PC-9 (cell line): ENCODE measurements at regions of chr14 and their contacts with region 1.

Region 1: GRCh38 chr14:44897045-44897844 is 64.5 kb downstream of the KLHL28 start:
- DNase-seq: peak; percentile 85 to 87
- H3K4me3 ChIP-seq: peak overlapping the region; percentile 77
- H3K27ac ChIP-seq: peak overlapping the region; percentile 90
- H3K4me1 ChIP-seq: peaks cover 14% of the 10 kb centered on the region
- H3K27me3 ChIP-seq: no peaks in the 10 kb centered on the region
- CTCF ChIP-seq: no peak

Region 2: DNA sequence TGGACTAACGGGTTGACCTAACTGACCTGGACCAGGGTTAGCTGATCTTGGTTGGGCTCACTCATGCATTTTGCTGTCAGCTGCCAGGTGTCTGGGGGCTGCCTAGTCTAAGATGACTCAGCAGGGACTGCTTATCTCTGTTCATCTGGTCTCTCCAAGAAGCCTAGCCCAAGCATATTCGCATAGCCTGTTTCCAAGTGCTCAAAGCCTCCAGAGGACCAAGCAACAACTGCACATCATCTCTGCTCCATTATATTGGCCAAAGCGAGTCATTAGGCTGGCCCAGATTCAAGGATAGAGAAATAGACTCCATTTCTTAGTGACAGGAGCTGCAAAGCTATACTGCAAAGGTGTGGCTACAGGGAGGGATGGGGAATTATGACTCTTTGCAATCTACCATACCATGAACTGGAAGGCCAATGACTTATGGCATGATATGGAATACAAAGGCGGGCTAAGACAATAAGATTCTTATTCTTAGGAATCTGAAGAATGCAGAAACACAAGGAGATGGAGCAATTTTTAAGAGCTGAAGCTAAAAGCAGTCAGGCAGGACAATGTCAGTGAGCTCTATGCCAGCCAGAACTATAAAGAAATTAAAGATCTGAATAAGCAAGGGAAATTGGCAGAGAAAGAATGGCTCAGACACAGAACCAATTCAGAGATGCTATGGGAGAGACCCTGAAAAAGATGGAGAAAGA is 195.5 kb before region 1 on chr14:
- CTCF ChIA-PET with region 1: no interaction called
- POLR2A ChIA-PET with region 1: no interaction called
- intact Hi-C with region 1: no loop called
- DNase-seq: peak in 1 of 2 experiments; percentile 9
- H3K4me3 ChIP-seq: no peak overlapping the region
- H3K27ac ChIP-seq: no peak overlapping the region
- H3K4me1 ChIP-seq: no peaks in the 10 kb centered on the region
- H3K27me3 ChIP-seq: no peaks in the 10 kb centered on the region
- CTCF ChIP-seq: no peak

Region 3: DNA sequence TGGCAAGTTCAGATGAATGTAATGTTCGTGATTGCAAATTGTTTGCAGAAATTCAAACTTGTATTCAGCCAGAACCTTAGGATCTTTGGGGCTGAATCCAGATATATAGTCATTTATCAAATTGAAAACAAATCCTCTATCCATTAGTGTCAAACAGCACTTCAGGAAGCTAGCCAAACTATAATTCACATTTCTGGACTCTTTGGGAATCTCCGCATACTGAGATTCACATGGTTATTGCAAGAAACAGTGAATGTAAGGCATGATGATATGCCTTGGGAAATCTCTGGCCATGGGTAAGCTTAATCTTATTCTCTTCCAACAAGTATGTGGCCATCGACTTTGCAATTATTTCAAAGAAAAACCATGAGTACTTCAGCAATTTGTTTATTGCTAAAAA is 34.0 kb before region 1 on chr14:
- CTCF ChIA-PET with region 1: no interaction called
- POLR2A ChIA-PET with region 1: no interaction called
- intact Hi-C with region 1: no loop called
- DNase-seq: no peak
- H3K4me3 ChIP-seq: no peak overlapping the region
- H3K27ac ChIP-seq: no peak overlapping the region
- H3K4me1 ChIP-seq: no peaks in the 10 kb centered on the region
- H3K27me3 ChIP-seq: peaks cover 27% of the 10 kb centered on the region; the same call in 1 of the 2 replicates
- CTCF ChIP-seq: no peak

Region 4: GRCh38 chr14:44961604-44962333 is 64.5 kb after region 1 on chr14 and contains the starts of genes KLHL28 and TOGARAM1:
- CTCF ChIA-PET with region 1: no interaction called
- POLR2A ChIA-PET with region 1: no interaction called
- intact Hi-C with region 1: loop called (anchors 1 kb)
- DNase-seq: peak; percentile 94 to 99
- H3K4me3 ChIP-seq: peak within 1 kb of the TSS; percentile 65
- H3K27ac ChIP-seq: peak within 1 kb of the TSS; percentile 69
- H3K4me1 ChIP-seq: peaks cover 35% of the 10 kb centered on the region
- H3K27me3 ChIP-seq: no peaks in the 10 kb centered on the region
- CTCF ChIP-seq: no peak
- total RNA-seq, gene KLHL28: 10.3 and 10.5 TPM in 2 replicates
- total RNA-seq, gene TOGARAM1: 9.2 and 12.9 TPM in 2 replicates

Region 5: DNA sequence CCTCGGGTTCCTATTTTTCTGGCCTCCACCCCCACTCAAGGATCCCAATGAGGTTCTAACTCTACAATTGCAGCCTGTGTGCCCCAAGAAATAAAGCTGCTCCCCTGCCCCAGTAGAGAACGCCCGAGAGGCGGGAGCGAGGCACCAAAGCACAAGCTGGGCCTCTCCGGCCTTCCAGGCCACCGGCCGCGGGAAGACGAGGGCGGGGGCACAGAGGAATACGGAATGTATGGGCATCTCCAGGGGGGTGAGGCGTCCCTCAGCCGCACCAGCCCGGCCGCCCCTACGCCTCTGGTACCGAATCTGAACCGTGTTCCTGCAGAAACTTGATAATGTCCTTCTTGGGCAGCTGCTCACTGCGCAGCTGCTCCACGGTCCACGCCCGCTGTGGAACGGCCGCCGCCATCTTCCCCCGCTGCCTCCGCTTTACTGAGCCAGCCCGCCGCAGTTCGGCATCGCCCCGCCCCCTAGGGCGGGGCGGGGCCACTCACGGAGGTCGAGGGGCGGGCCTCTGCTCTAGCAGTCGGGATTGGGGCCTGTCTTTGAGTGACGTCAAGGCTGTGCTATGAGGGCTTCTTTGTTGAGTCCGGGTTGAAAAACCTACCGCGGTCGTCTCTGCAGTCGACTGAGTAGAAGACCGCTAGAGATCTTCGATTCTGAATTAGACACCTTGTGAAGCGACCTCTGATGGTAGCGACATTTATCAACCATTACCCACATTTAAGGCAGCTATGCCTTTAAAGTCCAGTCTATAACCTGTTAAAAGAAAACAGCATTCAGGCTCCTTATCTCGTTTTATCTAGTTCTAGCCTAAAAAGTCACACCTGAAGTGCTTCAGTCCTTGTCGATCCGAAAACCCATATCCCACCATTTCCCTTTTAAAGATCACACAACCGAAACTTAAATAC is 237.1 kb after region 1 on chr14 and contains the start of gene FKBP3:
- CTCF ChIA-PET with region 1: no interaction called
- POLR2A ChIA-PET with region 1: no interaction called
- intact Hi-C with region 1: loop called (anchors 5 kb)
- DNase-seq: peak; percentile 91 to 98
- H3K4me3 ChIP-seq: peak within 1 kb of the TSS; percentile 94
- H3K27ac ChIP-seq: peak within 1 kb of the TSS; percentile 72
- H3K4me1 ChIP-seq: peaks cover 27% of the 10 kb centered on the region
- H3K27me3 ChIP-seq: no peaks in the 10 kb centered on the region
- CTCF ChIP-seq: peak; percentile 22; the same call in 1 of the 2 replicates
- total RNA-seq, gene FKBP3: 39.4 and 53.5 TPM in 2 replicates

Region 6: GRCh38 chr14:45144658-45145057 is 247.4 kb after region 1 on chr14:
- CTCF ChIA-PET with region 1: no interaction called
- POLR2A ChIA-PET with region 1: interaction called, 11 read pairs
- intact Hi-C with region 1: no loop called
- DNase-seq: no peak
- H3K4me3 ChIP-seq: no peak overlapping the region
- H3K27ac ChIP-seq: no peak overlapping the region
- H3K4me1 ChIP-seq: no peaks in the 10 kb centered on the region
- H3K27me3 ChIP-seq: no peaks in the 10 kb centered on the region
- CTCF ChIP-seq: no peak

Region 7: GRCh38 chr14:45238988-45239387 is 341.7 kb after region 1 on chr14:
- CTCF ChIA-PET with region 1: no interaction called
- POLR2A ChIA-PET with region 1: interaction called, 26 read pairs
- intact Hi-C with region 1: no loop called
- DNase-seq: no peak
- H3K4me3 ChIP-seq: no peak overlapping the region
- H3K27ac ChIP-seq: no peak overlapping the region
- H3K4me1 ChIP-seq: no peaks in the 10 kb centered on the region
- H3K27me3 ChIP-seq: no peaks in the 10 kb centered on the region
- CTCF ChIP-seq: no peak

Region 8: DNA sequence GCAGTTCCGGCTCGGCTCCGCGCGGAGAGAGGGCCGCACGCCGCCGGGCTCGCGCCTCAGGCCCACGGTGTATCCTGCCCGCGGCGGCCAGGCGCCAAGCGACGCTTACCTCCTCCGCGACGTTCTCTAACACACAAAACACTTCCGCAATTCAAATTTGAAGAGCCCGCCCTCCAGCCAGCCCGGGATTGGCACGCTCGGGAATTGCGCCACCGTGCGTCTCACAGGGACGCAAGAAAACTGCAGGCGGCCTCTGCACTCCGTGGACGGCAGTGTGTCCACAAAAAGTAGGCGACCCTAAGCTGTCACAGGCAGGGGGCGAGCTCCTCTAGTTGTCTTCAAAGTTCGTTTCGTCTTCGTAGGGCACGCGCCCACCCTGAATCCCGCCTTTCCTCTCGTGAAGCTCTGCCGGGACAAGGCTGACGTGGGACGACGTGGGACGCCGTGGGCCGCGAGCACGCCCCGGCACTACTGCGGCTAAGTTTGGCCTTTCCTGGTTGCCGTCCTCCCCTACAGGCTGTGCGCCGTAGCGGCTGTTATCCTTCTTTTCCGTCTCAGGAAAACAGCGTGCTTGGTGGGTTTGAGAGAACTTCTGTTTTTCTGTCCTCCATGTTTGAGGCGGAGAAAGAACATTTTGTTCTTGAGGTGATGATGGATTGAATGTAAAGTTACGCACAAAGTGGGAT is 356.0 kb after region 1 on chr14 and contains the start of gene MIS18BP1:
- CTCF ChIA-PET with region 1: no interaction called
- POLR2A ChIA-PET with region 1: no interaction called
- intact Hi-C with region 1: loop called (anchors 1 kb)
- DNase-seq: peak; percentile 93 to 94
- H3K4me3 ChIP-seq: peak within 1 kb of the TSS; percentile 94
- H3K27ac ChIP-seq: peak within 1 kb of the TSS; percentile 90
- H3K4me1 ChIP-seq: peaks cover 29% of the 10 kb centered on the region
- H3K27me3 ChIP-seq: no peaks in the 10 kb centered on the region
- CTCF ChIP-seq: peak; percentile 63
- total RNA-seq, gene MIS18BP1: 41.0 and 54.4 TPM in 2 replicates

Region 9: GRCh38 chr14:46686652-46687051 is 1789.4 kb after region 1 on chr14:
- CTCF ChIA-PET with region 1: no interaction called
- POLR2A ChIA-PET with region 1: interaction called, 21 read pairs
- intact Hi-C with region 1: no loop called
- DNase-seq: no peak
- H3K4me3 ChIP-seq: no peak overlapping the region
- H3K27ac ChIP-seq: no peak overlapping the region
- H3K4me1 ChIP-seq: no peaks in the 10 kb centered on the region
- H3K27me3 ChIP-seq: no peaks in the 10 kb centered on the region
- CTCF ChIP-seq: no peak